ENCODE measurements at regions of chr12 and their contacts with region 1.

Region 1: DNA sequence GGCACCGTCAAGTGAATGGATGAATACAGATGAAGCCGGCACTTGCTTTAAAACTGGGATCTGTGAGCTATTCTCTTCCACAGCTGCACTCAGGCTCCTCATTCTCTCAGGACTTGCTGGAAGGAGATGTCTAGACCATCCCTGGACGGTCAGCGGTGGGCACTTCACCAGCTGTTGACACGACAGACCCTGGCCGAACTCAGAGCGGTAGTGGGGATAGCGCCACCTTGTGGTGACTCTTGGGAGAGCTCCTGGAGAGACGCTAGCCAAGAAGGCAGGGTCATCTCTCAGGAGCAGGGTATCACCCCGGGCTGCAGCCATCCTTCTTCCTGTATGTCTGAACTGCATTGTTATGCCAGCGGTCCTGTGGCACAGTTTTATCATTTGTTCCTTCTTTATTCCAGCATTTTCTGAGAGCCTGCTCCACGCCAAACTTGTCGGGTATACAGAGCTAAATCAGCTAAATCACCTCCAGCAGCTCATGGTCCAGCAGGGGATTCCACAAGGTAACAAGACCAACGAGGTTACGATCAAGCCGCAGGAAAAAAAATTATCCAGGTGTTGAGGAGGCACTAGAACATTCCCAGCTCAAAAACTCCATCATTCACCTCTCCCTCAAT is 10.0 kb downstream of the WNT1 start:
- DNase-seq: peak; percentile 60
- H3K4me3 ChIP-seq: no peak overlapping the region
- H3K27ac ChIP-seq: no peak overlapping the region
- H3K4me1 ChIP-seq: peaks cover 17% of the 10 kb centered on the region
- H3K27me3 ChIP-seq: peaks cover 19% of the 10 kb centered on the region
- CTCF ChIP-seq: peak; percentile 97

Region 2: GRCh38 chr12:48930475-48930874 is 57.7 kb before region 1 on chr12:
- CTCF ChIA-PET with region 1: interaction called, 10 read pairs
- POLR2A ChIA-PET with region 1: no interaction called
- intact Hi-C with region 1: no loop called
- DNase-seq: no peak
- H3K4me3 ChIP-seq: no peak overlapping the region
- H3K27ac ChIP-seq: no peak overlapping the region
- H3K4me1 ChIP-seq: peaks cover 4% of the 10 kb centered on the region
- H3K27me3 ChIP-seq: no peaks in the 10 kb centered on the region
- CTCF ChIP-seq: no peak